ENCODE measurements at regions of chr3 and their contacts with region 1.

Region 1: GRCh38 chr3:87503900-87504508 is 227.6 kb upstream of the POU1F1 start:
- DNase-seq: peak in 1 of 2 experiments; percentile 57
- H3K4me3 ChIP-seq: no peak overlapping the region
- H3K4me3 Mint-ChIP-seq: no peak overlapping the region
- H3K27ac Mint-ChIP-seq: no peak overlapping the region
- H3K4me1 ChIP-seq: no peaks in the 10 kb centered on the region
- H3K4me1 Mint-ChIP-seq: no peaks in the 10 kb centered on the region
- H3K27me3 ChIP-seq: no peaks in the 10 kb centered on the region
- H3K27me3 Mint-ChIP-seq: no peaks in the 10 kb centered on the region
- CTCF ChIP-seq: peak; percentile 66 to 73

Region 2: GRCh38 chr3:87260270-87260669 is 243.7 kb before region 1 on chr3:
- CTCF ChIA-PET with region 1: no interaction called
- POLR2A ChIA-PET with region 1: no interaction called
- intact Hi-C with region 1: loop called (anchors 1 kb)
- DNase-seq: peak; percentile 42 to 49
- H3K4me3 ChIP-seq: no peak overlapping the region
- H3K4me3 Mint-ChIP-seq: no peak overlapping the region
- H3K27ac Mint-ChIP-seq: no peak overlapping the region
- H3K4me1 ChIP-seq: 0 out of 2 replicates have a peak, but pooled peaks cover 5% of the 10 kb centered on the region
- H3K4me1 Mint-ChIP-seq: no peaks in the 10 kb centered on the region
- H3K27me3 ChIP-seq: no peaks in the 10 kb centered on the region
- H3K27me3 Mint-ChIP-seq: no peaks in the 10 kb centered on the region
- CTCF ChIP-seq: peak; percentile 40 to 59

Region 3: GRCh38 chr3:87553058-87553457 is 49.1 kb after region 1 on chr3:
- CTCF ChIA-PET with region 1: no interaction called
- POLR2A ChIA-PET with region 1: no interaction called
- intact Hi-C with region 1: no loop called
- DNase-seq: no peak
- H3K4me3 ChIP-seq: no peak overlapping the region
- H3K4me3 Mint-ChIP-seq: no peak overlapping the region
- H3K27ac Mint-ChIP-seq: no peak overlapping the region
- H3K4me1 ChIP-seq: 0 out of 2 replicates have a peak, but pooled peaks cover 4% of the 10 kb centered on the region
- H3K4me1 Mint-ChIP-seq: no peaks in the 10 kb centered on the region
- H3K27me3 ChIP-seq: no peaks in the 10 kb centered on the region
- H3K27me3 Mint-ChIP-seq: no peaks in the 10 kb centered on the region
- CTCF ChIP-seq: no peak

Measured in Caco-2 (cell line).